Aorta (tissue), 5 donors: ENCODE measurements at regions of chr1 and their contacts with region 1.

Region 1: DNA sequence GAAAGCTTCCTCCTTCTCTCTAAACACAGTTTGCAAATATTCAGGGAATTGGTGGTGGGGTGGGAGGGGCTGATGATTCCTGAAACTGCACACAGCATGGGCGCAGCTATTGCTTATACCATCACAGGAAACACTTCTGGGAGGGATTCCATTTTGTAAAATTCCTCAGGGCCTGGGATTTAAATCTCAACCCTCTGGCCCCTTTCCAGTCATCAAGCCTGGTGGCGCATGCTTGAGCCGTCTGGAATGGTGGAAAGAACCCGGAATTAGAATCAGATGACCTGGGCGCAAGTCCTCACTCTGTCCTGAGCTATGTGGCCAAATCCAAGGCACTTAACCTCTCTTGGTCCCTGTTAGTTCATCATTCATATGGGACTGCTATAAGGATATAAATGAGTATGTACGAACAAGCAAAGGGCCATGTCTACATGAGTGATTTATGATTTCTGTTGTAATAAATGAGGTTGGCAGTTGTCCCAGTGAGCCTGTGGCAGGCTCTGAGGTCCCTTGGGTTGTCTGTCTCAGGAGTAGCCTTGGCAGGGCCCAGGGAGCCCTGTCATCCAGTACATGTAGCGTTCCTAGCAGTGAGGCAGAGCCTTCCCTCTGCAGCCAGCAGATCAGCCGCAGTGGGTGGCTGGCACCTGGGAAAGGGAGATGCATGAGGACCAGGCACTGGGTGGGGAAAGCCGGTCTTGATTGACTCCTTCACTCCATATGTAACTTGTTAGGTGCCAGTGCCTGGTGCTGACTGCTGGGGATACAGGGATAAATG is 72.0 kb downstream of the MAN1C1 start:
- DNase-seq: peak; percentile 76 to 84
- ATAC-seq: peak; percentile 64
- H3K4me3 ChIP-seq: no peak overlapping the region
- H3K27ac ChIP-seq: peak overlapping the region in 1 of 2 donors; percentile 85
- H3K4me1 ChIP-seq: no peaks in the 10 kb centered on the region
- H3K27me3 ChIP-seq: no peaks in the 10 kb centered on the region

Region 2: DNA sequence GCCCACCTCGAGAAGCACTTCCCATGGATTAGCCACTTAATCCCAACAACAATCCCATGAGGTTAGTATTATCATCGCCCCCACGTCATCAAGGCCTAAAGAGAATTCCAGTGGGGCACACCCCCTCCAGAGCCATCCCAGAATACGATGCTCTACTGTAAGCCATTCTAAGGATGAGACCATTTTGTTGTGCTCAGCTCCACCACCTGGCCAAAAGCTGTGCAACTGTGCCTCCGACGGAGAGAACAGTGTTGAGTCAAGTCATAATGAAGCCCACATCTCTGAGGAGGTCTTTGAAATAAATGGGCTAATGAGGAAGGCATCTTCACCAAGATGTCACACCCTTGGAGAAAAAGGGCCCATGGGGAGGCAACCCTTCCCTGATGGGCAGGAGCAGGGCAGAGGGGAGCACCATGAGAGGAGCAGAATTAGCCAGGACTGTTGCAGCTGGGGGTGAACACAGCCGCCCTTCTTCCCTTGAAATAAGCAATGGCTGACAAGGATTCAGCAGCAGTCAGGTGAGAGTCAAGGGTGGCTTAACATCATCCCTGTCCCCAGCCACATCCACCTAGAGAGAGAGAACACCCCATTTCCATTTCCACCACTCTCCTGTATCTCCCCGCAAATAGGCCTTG is 470.9 kb before region 1 on chr1:
- intact Hi-C with region 1: no loop called
- DNase-seq: no peak
- ATAC-seq: no peak
- H3K4me3 ChIP-seq: no peak overlapping the region
- H3K27ac ChIP-seq: no peak overlapping the region
- H3K4me1 ChIP-seq: no peaks in the 10 kb centered on the region
- H3K27me3 ChIP-seq: no peaks in the 10 kb centered on the region

Region 3: DNA sequence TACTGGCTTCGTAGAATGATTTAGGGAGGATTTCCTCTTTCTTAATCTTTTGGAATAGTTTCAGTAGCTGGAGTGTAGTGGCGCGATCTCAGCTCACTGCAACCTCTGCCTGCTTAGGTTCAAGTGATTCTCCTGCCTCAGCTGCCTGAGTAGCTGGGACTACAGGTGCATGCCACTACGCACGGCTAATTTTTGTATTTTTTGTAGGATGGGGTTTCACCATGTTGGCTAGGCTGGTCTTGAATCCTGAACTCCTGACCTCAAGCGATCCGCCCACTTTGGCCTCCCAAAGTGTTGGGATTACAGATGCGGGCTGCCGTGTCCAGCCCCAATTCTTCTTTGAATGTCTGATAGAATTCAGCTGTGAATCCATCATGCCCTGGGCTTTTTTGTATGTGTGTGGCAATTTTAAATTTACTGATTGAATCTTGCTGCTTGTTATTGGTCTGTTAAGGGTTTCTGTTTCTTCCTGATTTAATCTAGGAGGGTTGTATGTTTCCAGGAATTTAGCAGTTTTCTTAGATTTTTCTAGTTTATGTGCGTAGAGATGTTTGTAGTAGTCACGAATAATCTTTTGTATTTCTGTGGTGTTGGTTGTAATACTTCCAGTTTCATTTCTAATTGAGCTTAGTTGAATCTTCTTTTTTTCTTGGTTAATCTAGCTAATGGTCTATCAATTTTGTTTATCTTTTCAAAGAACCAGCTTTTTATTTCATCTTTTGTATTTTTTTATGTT is 56.7 kb before region 1 on chr1:
- intact Hi-C with region 1: loop called in 1 of 2 experiments (anchors 10 kb)
- DNase-seq: no peak
- ATAC-seq: peak; percentile 46
- H3K4me3 ChIP-seq: no peak overlapping the region
- H3K27ac ChIP-seq: no peak overlapping the region
- H3K4me1 ChIP-seq: no peaks in the 10 kb centered on the region
- H3K27me3 ChIP-seq: no peaks in the 10 kb centered on the region